ENCODE measurements at regions of chr3 and their contacts with region 1.

Region 1: DNA sequence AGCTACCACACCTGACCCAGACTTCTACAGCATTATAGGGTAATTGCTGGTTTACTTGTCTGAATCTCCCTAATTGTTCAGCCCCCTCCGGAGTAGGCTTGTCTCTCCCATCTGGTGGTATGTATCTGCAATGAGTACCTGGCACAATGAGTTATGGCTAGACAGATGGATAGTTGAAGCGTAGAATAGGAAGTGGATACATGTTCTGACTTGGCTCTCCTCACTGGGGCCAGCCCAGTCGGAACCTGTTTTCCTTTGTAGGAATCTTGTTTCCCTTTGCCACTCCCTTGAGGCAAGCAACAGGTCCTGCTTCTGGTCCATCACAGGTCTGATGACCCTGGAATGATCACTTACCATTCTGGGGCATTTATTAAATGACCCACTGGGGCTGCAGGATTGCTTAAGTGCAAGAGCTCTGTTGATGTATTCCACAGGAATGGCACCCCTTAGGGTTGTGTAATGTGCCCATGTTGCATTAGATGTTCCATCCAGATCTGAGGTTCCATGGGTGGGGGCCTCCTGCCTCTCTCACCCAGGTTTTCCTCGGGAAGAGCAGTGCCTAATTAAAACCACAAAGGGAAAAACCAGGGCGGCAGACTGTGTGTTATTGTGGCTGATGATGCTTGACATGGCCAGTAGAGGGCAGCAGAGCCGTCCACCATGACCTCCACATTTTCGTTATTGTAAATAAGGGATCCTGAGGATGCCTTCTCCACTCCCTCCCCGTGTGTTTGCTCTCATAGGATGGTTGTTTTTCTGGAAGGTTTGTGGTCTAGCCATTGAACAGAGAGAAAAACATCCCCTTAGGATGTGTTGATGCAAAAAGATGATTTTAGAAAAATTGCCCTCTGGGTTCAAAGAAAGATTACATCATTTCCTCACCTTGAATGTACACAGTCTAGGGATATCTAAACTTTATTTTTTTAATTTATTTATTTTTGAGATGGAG is 58.0 kb downstream of the CMTM8 start:
- DNase-seq: peak; percentile 35 to 73 (median 62)
- ATAC-seq: peak; percentile 89
- H3K4me3 ChIP-seq: no peak overlapping the region
- H3K4me3 Mint-ChIP-seq: peak overlapping the region; percentile 60 to 80 (median 72)
- H3K27ac ChIP-seq: peak overlapping the region; percentile 53
- H3K27ac Mint-ChIP-seq: peak overlapping the region; percentile 89 to 99 (median 95)
- H3K4me1 ChIP-seq: peaks cover 15 to 18% of the 10 kb centered on the region in 2 donors
- H3K4me1 Mint-ChIP-seq: peaks cover 21 to 65% (median 39%) of the 10 kb centered on the region in 7 donors
- H3K27me3 ChIP-seq: no peaks in the 10 kb centered on the region
- H3K27me3 Mint-ChIP-seq: no peaks in the 10 kb centered on the region

Region 2: GRCh38 chr3:30524357-30525040 is 1772.0 kb before region 1 on chr3:
- CTCF ChIA-PET with region 1: no interaction called
- POLR2A ChIA-PET with region 1: no interaction called
- intact Hi-C with region 1: no loop called
- DNase-seq: peak in 1 of 9 donors; percentile 4
- ATAC-seq: peak; percentile 41
- H3K4me3 ChIP-seq: no peak overlapping the region
- H3K4me3 Mint-ChIP-seq: peak overlapping the region in 9 of 10 donors; percentile 4 to 66 (median 48)
- H3K27ac ChIP-seq: no peak overlapping the region
- H3K27ac Mint-ChIP-seq: peak overlapping the region in 5 of 9 donors; percentile 0 to 63 (median 16)
- H3K4me1 ChIP-seq: no peaks in the 10 kb centered on the region
- H3K4me1 Mint-ChIP-seq: peaks cover 8 to 27% (median 23%) of the 10 kb centered on the region in 7 donors
- H3K27me3 ChIP-seq: no peaks in the 10 kb centered on the region
- H3K27me3 Mint-ChIP-seq: peaks cover 0 to 3% (median 0%) of the 10 kb centered on the region in 5 donors

Region 3: DNA sequence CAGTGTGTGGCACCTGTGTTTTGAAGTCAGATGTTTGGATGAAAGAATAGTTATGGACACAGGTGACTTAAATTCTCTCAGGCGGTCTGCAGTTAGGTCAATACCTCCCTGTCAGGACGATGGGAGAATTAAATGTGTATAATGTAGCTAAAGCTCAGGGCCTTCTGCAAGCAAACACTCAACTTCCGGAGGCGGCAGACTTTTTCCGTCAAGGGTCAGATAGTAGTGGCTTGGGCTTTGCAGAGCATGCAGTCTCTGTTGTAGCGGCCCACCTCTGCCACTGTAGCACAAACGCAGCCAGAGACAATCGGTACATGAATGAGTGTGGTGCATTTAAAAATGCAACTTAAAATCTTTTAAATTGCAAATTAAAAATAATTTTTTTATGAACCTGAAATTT is 10.6 kb before region 1 on chr3:
- CTCF ChIA-PET with region 1: interaction called, 17 read pairs
- POLR2A ChIA-PET with region 1: interaction called, 4 read pairs
- intact Hi-C with region 1: no loop called
- DNase-seq: no peak
- ATAC-seq: peak; percentile 11
- H3K4me3 ChIP-seq: no peak overlapping the region
- H3K4me3 Mint-ChIP-seq: peak overlapping the region in 8 of 10 donors; percentile 22 to 73 (median 56)
- H3K27ac ChIP-seq: peak overlapping the region; percentile 45
- H3K27ac Mint-ChIP-seq: peak overlapping the region; percentile 72 to 94 (median 78)
- H3K4me1 ChIP-seq: peaks cover 0 to 12% of the 10 kb centered on the region in 2 donors
- H3K4me1 Mint-ChIP-seq: peaks cover 19 to 65% (median 38%) of the 10 kb centered on the region in 7 donors
- H3K27me3 ChIP-seq: no peaks in the 10 kb centered on the region
- H3K27me3 Mint-ChIP-seq: no peaks in the 10 kb centered on the region

Region 4: DNA sequence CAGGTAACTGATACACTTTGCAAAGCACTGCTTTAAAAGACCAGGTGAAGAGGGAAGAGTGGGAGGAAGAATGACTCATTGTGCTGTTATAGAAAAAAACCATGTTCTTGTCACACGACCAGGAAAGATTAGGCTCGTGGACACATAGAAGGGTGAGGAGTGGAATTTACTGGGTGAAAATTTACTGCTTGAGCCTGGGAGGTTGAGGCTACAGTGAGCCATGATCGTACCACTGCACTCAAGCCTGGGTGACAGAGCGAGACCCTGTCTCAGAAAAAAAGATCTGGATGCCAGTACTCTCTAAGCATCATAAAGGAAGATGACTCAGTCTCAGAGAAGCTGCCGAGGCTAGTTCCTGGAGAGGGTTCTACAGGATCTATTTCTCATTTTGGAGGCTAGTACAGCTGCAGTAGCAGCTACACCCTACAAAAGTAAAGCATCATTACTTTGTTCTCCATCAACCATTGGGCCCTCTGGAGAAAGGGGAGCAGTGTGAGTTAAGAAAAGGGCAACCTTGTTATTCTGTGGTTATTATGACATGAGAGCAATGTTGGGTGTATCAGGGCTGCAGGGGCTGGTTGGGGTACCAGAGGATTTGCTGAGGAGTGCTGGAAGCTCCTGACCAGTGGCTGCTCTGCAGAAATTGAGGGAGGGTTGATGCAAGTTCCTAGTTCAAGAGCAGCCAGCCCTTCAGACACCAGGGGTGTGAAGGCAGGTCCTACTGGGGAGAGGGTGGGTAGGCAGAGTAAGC is 17.4 kb after region 1 on chr3:
- CTCF ChIA-PET with region 1: interaction called, 4 read pairs
- POLR2A ChIA-PET with region 1: interaction called, 26 read pairs
- intact Hi-C with region 1: loop called (anchors 1 to 2 kb)
- DNase-seq: peak in 1 of 9 donors; percentile 38
- ATAC-seq: peak; percentile 37
- H3K4me3 ChIP-seq: no peak overlapping the region
- H3K4me3 Mint-ChIP-seq: peak overlapping the region; percentile 2 to 81 (median 44)
- H3K27ac ChIP-seq: peak overlapping the region; percentile 30
- H3K27ac Mint-ChIP-seq: peak overlapping the region; percentile 53 to 98 (median 79)
- H3K4me1 ChIP-seq: peaks cover 0 to 14% of the 10 kb centered on the region in 2 donors
- H3K4me1 Mint-ChIP-seq: peaks cover 17 to 52% (median 30%) of the 10 kb centered on the region in 7 donors
- H3K27me3 ChIP-seq: no peaks in the 10 kb centered on the region
- H3K27me3 Mint-ChIP-seq: no peaks in the 10 kb centered on the region

Region 5: DNA sequence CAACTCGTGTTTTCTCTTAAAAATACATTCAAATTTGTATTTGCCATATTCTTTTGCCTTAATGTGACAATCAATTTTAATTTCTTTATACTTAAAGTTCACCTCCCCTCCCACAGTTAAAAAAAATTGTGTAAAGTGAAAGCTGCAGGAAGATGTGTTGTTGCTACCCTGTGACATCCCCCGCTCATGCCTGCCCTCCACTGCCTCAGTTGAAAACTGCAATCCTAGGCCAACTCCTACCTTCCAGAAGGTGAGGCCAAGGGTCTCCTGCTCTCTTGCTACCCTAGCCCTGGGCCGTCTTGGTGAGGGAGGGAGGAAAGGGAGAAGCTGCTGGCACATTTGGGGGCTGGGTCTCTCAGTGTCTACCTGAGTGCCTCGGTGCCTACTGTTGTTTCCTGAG is 38.1 kb after region 1 on chr3:
- CTCF ChIA-PET with region 1: interaction called, 224 read pairs
- POLR2A ChIA-PET with region 1: interaction called, 20 read pairs
- intact Hi-C with region 1: loop called (anchors 1 kb)
- DNase-seq: peak; percentile 15 to 72 (median 65)
- ATAC-seq: peak; percentile 83
- H3K4me3 ChIP-seq: no peak overlapping the region
- H3K4me3 Mint-ChIP-seq: peak overlapping the region; percentile 5 to 87 (median 66)
- H3K27ac ChIP-seq: peak overlapping the region; percentile 49
- H3K27ac Mint-ChIP-seq: peak overlapping the region; percentile 78 to 96 (median 92)
- H3K4me1 ChIP-seq: peaks cover 0 to 32% of the 10 kb centered on the region in 2 donors
- H3K4me1 Mint-ChIP-seq: peaks cover 39 to 67% (median 60%) of the 10 kb centered on the region in 7 donors
- H3K27me3 ChIP-seq: no peaks in the 10 kb centered on the region
- H3K27me3 Mint-ChIP-seq: no peaks in the 10 kb centered on the region

Region 6: GRCh38 chr3:32340039-32340438 is 43.5 kb after region 1 on chr3:
- CTCF ChIA-PET with region 1: interaction called, 224 read pairs
- POLR2A ChIA-PET with region 1: interaction called, 20 read pairs
- intact Hi-C with region 1: loop called (anchors 1 kb)
- DNase-seq: peak in 7 of 9 donors; percentile 31 to 65 (median 56)
- ATAC-seq: peak; percentile 77
- H3K4me3 ChIP-seq: no peak overlapping the region
- H3K4me3 Mint-ChIP-seq: no peak overlapping the region
- H3K27ac ChIP-seq: no peak overlapping the region
- H3K27ac Mint-ChIP-seq: no peak overlapping the region
- H3K4me1 ChIP-seq: peaks cover 0 to 18% of the 10 kb centered on the region in 2 donors
- H3K4me1 Mint-ChIP-seq: peaks cover 18 to 30% (median 27%) of the 10 kb centered on the region in 7 donors
- H3K27me3 ChIP-seq: no peaks in the 10 kb centered on the region
- H3K27me3 Mint-ChIP-seq: no peaks in the 10 kb centered on the region